ENCODE measurements at regions of chr15 and their contacts with region 1.

Region 1: DNA sequence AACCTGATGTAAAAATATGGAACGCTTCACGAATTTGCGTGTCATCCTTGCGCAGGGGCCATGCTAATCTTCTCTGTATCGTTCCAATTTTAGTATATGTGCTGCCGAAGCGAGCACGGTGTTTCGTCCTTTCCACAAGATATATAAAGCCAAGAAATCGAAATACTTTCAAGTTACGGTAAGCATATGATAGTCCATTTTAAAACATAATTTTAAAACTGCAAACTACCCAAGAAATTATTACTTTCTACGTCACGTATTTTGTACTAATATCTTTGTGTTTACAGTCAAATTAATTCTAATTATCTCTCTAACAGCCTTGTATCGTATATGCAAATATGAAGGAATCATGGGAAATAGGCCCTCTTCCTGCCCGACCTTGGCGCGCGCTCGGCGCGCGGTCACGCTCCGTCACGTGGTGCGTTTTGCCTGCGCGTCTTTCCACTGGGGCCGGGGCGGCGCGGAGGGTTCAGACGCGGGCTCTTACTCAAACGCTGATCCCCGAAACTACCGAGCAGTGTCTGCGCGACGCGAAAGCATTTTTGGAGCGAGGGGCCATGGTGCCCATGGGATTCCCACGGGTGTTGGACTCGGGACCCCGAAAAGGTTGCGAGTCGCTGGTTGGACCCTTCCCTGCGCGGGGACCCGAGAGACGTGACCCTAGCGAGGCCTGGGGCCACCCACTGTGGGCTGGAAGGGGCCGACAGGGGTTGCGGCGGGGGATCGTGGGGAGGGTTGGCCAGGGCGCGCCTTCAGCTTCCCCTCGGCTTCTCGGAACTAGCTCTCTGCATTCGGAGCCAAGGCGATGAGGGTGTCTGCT is at the start of gene RNU6-1:
- DNase-seq: peak; percentile 92 to 94
- H3K4me3 ChIP-seq: peak within 1 kb of the TSS; percentile 85
- H3K4me3 Mint-ChIP-seq: peak within 1 kb of the TSS; percentile 70
- H3K27ac Mint-ChIP-seq: peak within 1 kb of the TSS; percentile 95
- H3K4me1 ChIP-seq: peaks cover 32% of the 10 kb centered on the region
- H3K4me1 Mint-ChIP-seq: peaks cover 27% of the 10 kb centered on the region
- H3K27me3 ChIP-seq: no peaks in the 10 kb centered on the region
- H3K27me3 Mint-ChIP-seq: no peaks in the 10 kb centered on the region
- CTCF ChIP-seq: no peak
- total RNA-seq, gene RNU6-1: not detected in 2 replicates

Region 2: DNA sequence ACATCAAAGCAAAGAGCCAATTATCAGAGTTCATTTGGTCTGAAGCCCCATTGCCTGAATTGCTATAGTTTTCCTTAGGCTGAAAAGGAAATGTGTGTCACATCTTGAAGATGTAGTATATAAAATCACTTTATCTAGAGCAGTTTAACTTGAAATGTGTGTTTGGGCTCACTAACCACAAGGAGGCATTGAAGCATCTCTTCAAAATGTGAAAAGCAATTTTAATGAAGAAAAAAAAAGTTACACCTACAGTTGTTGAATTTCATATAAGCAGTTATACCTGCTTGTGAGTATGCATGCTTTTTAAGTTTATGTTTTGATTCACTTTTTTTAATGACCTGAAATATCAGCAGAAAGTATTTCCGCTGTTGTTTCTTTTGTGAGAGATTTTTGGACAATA is 456.2 kb before region 1 on chr15:
- CTCF ChIA-PET with region 1: no interaction called
- POLR2A ChIA-PET with region 1: no interaction called
- intact Hi-C with region 1: loop called (anchors 10 kb)
- DNase-seq: no peak
- H3K4me3 ChIP-seq: no peak overlapping the region
- H3K4me3 Mint-ChIP-seq: no peak overlapping the region
- H3K27ac Mint-ChIP-seq: no peak overlapping the region
- H3K4me1 ChIP-seq: no peaks in the 10 kb centered on the region
- H3K4me1 Mint-ChIP-seq: no peaks in the 10 kb centered on the region
- H3K27me3 ChIP-seq: no peaks in the 10 kb centered on the region
- H3K27me3 Mint-ChIP-seq: peaks cover 7% of the 10 kb centered on the region
- CTCF ChIP-seq: no peak

Region 3: GRCh38 chr15:67521029-67521811 is 318.9 kb before region 1 on chr15 and contains the start of gene C15orf61:
- CTCF ChIA-PET with region 1: interaction called, 3 read pairs
- POLR2A ChIA-PET with region 1: no interaction called
- intact Hi-C with region 1: loop called (anchors 5 kb)
- DNase-seq: peak; percentile 93 to 95
- H3K4me3 ChIP-seq: peak within 1 kb of the TSS; percentile 75
- H3K4me3 Mint-ChIP-seq: peak within 1 kb of the TSS; percentile 92
- H3K27ac Mint-ChIP-seq: peak within 1 kb of the TSS; percentile 97
- H3K4me1 ChIP-seq: peaks cover 9% of the 10 kb centered on the region; the same call in 1 of the 2 replicates
- H3K4me1 Mint-ChIP-seq: peaks cover 11% of the 10 kb centered on the region
- H3K27me3 ChIP-seq: no peaks in the 10 kb centered on the region
- H3K27me3 Mint-ChIP-seq: no peaks in the 10 kb centered on the region
- CTCF ChIP-seq: no peak
- total RNA-seq, gene C15orf61: 6.0 and 10.5 TPM in 2 replicates

Region 4: GRCh38 chr15:67746022-67746421 is 94.1 kb before region 1 on chr15:
- CTCF ChIA-PET with region 1: no interaction called
- POLR2A ChIA-PET with region 1: no interaction called
- intact Hi-C with region 1: no loop called
- DNase-seq: no peak
- H3K4me3 ChIP-seq: no peak overlapping the region
- H3K4me3 Mint-ChIP-seq: no peak overlapping the region
- H3K27ac Mint-ChIP-seq: no peak overlapping the region
- H3K4me1 ChIP-seq: peaks cover 5% of the 10 kb centered on the region; the same call in 1 of the 2 replicates
- H3K4me1 Mint-ChIP-seq: peaks cover 7% of the 10 kb centered on the region
- H3K27me3 ChIP-seq: no peaks in the 10 kb centered on the region
- H3K27me3 Mint-ChIP-seq: no peaks in the 10 kb centered on the region
- CTCF ChIP-seq: no peak

Region 5: DNA sequence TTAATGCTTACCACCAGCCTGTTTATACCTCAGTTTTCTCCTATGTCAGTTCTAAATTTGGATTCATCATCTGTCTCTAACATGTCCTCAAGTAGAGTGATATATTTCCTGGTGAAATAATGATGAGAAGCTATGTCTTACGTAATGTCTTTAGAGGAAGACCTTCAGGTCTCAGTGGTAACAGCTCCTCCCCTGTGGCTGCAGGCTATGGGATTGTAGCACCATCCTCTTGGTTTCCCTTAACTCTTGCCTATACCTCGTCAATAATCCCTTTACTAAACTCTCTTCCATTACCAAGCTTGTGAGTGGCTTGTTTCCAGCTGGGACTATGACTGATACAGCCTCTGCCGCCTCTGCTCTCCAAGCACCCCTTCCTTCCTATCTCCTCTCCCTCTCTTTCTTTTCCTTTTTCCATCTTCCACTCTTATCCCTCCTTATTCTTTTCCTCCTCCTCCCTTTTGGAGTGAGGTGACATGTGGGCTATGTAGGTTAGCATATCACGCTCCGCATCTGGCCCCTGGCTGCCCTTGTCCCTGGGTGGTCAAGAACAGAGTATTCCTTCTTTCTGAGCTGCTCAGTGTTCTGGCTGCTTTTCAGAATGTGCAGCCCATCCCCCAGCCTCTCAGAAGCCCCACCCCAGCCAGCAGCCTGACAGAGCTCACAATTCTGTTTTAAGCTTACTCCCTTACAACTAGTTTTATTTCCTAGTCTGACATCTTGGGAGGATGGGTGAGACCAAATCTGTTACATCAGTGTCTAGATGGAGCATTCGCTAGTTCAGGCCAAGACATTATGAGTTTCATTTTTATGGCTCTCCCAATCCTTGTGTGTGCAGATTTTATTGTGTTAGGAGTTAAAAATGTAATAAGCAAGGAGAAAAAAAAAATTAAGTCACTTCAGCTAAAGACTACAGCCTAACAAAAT is 74.7 kb after region 1 on chr15:
- CTCF ChIA-PET with region 1: no interaction called
- POLR2A ChIA-PET with region 1: interaction called, 6 read pairs
- intact Hi-C with region 1: loop called (anchors 1 kb)
- DNase-seq: peak; percentile 74
- H3K4me3 ChIP-seq: peak overlapping the region; percentile 14
- H3K4me3 Mint-ChIP-seq: peak overlapping the region; percentile 64
- H3K27ac Mint-ChIP-seq: peak overlapping the region; percentile 72
- H3K4me1 ChIP-seq: peaks cover 55% of the 10 kb centered on the region
- H3K4me1 Mint-ChIP-seq: peaks cover 37% of the 10 kb centered on the region
- H3K27me3 ChIP-seq: no peaks in the 10 kb centered on the region
- H3K27me3 Mint-ChIP-seq: no peaks in the 10 kb centered on the region
- CTCF ChIP-seq: no peak

Region 6: DNA sequence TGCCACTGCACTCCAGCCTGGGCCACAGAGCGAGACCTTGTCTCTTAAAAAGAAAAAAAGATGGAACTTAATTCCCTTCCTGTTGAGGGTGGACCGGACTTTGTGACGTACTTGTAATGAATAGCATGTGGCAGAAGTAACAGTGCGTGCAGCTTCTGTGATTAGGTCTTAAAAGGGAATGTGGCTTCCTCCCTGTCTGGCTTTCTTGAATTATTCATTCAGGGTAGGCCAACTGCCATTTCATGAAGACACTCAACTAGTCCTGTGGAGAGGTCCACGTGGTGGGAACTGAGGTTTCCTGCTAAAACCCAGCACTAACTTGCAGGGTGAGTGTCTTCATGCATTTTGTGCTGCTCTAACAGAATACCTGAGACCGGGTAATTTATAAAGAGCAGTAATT is 115.1 kb after region 1 on chr15:
- CTCF ChIA-PET with region 1: no interaction called
- POLR2A ChIA-PET with region 1: no interaction called
- intact Hi-C with region 1: no loop called
- DNase-seq: no peak
- H3K4me3 ChIP-seq: no peak overlapping the region
- H3K4me3 Mint-ChIP-seq: no peak overlapping the region
- H3K27ac Mint-ChIP-seq: peak overlapping the region; percentile 28
- H3K4me1 ChIP-seq: peaks cover 13% of the 10 kb centered on the region
- H3K4me1 Mint-ChIP-seq: peaks cover 18% of the 10 kb centered on the region
- H3K27me3 ChIP-seq: no peaks in the 10 kb centered on the region
- H3K27me3 Mint-ChIP-seq: no peaks in the 10 kb centered on the region
- CTCF ChIP-seq: no peak

Region 7: GRCh38 chr15:68154923-68155559 is 314.9 kb after region 1 on chr15:
- CTCF ChIA-PET with region 1: interaction called, 3 read pairs
- POLR2A ChIA-PET with region 1: interaction called, 3 read pairs
- intact Hi-C with region 1: loop called (anchors 1 kb)
- DNase-seq: peak in 1 of 2 experiments; percentile 61
- H3K4me3 ChIP-seq: no peak overlapping the region
- H3K4me3 Mint-ChIP-seq: no peak overlapping the region
- H3K27ac Mint-ChIP-seq: no peak overlapping the region
- H3K4me1 ChIP-seq: peaks cover 12% of the 10 kb centered on the region
- H3K4me1 Mint-ChIP-seq: peaks cover 8% of the 10 kb centered on the region
- H3K27me3 ChIP-seq: no peaks in the 10 kb centered on the region
- H3K27me3 Mint-ChIP-seq: no peaks in the 10 kb centered on the region
- CTCF ChIP-seq: peak; percentile 65 to 72

Measured in Caco-2 (cell line).